ENCODE measurements at regions of chr2 and their contacts with region 1.

Region 1: GRCh38 chr2:237322564-237322963 is 91.4 kb downstream of the COL6A3 start:
- DNase-seq: peak in 1 of 5 donors; percentile 52
- ATAC-seq: peak in 3 of 4 donors; percentile 10 to 19 (median 19)
- H3K4me3 ChIP-seq: no peak overlapping the region
- H3K27ac ChIP-seq: peak overlapping the region in 9 of 12 donors; percentile 10 to 92 (median 63)
- H3K4me1 ChIP-seq: peaks cover 0 to 55% (median 9%) of the 10 kb centered on the region in 12 donors
- H3K27me3 ChIP-seq: no peaks in the 10 kb centered on the region
- CTCF ChIP-seq: peak; percentile 10 to 52 (median 31)
- POLR2A ChIP-seq: no peak

Region 2: GRCh38 chr2:237165405-237166276 is 156.9 kb before region 1 on chr2:
- intact Hi-C with region 1: loop called in 7 of 10 experiments (anchors 2 to 10 kb)
- DNase-seq: no peak
- ATAC-seq: peak in 1 of 4 donors; percentile 39
- H3K4me3 ChIP-seq: no peak overlapping the region
- H3K27ac ChIP-seq: peak overlapping the region in 7 of 12 donors; percentile 5 to 58 (median 51)
- H3K4me1 ChIP-seq: peaks cover 0 to 8% (median under 1%) of the 10 kb centered on the region in 12 donors
- H3K27me3 ChIP-seq: no peaks in the 10 kb centered on the region
- CTCF ChIP-seq: peak; percentile 25 to 63 (median 47)
- POLR2A ChIP-seq: no peak

Region 3: GRCh38 chr2:237291138-237291792 is 31.3 kb before region 1 on chr2:
- intact Hi-C with region 1: no loop called
- DNase-seq: peak; percentile 93 to 99 (median 97)
- ATAC-seq: peak; percentile 95 to 97 (median 97)
- H3K4me3 ChIP-seq: peak overlapping the region in 5 of 12 donors; percentile 3 to 27 (median 11)
- H3K27ac ChIP-seq: peak overlapping the region; percentile 74 to 92 (median 84)
- H3K4me1 ChIP-seq: peaks cover 0 to 41% (median 27%) of the 10 kb centered on the region in 12 donors
- H3K27me3 ChIP-seq: no peaks in the 10 kb centered on the region
- CTCF ChIP-seq: no peak
- POLR2A ChIP-seq: peak in 1 of 2 donors; percentile 6

Region 4: DNA sequence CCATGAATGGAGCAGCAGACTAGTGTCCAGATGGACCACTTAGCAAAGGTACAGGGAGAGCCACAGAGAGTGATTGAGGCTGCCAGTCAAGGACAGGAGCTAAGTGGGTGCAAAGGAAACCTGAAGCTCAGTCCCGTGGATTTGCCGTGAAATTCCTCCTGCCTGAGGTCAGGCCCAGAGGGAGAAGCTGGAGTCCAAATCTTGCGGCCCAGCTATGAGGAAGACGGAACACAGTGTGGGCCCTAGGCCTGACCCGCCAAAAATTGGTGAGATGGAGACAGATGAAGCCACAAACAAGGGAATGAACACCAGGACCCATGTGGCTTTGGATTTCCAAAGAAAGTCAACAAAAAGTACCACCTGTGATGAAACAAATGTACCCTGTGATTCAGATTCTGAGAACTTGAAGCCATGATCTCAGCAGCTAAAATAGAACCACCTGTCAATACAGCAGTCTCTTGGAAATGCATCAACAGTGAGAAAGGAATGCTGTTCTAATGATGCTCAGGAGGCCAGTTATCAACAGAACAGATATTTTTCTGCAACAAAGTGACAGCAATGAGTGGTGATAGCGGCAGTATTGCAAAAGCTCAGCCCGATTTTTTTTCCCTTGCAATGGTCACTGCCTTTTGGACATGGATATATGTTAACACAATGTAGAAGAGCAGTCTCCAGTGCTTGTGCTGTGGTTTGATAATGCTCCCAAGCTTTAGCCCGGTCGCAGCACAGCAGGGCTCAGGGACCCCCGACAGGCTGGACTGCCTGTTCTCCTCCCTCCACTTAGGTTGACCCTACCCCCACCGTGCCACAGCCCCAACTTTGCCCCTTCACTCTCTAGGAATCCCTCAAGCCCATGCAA is 80.7 kb after region 1 on chr2:
- intact Hi-C with region 1: loop called in 1 of 10 experiments (anchors 5 kb)
- DNase-seq: peak in 2 of 5 donors; percentile 47 to 57
- ATAC-seq: peak; percentile 75 to 79 (median 77)
- H3K4me3 ChIP-seq: no peak overlapping the region
- H3K27ac ChIP-seq: peak overlapping the region in 8 of 12 donors; percentile 3 to 89 (median 52)
- H3K4me1 ChIP-seq: peaks cover 0 to 61% (median 15%) of the 10 kb centered on the region in 12 donors
- H3K27me3 ChIP-seq: no peaks in the 10 kb centered on the region
- CTCF ChIP-seq: no peak
- POLR2A ChIP-seq: no peak